Vagina (tissue), 2 donors: ENCODE measurements at regions of chr11 and their contacts with region 1.

Region 1: GRCh38 chr11:117316197-117316961 is at the start of gene BACE1:
- DNase-seq: no peak
- H3K4me3 ChIP-seq: peak within 1 kb of the TSS; percentile 86 to 89
- H3K27ac ChIP-seq: peak within 1 kb of the TSS; percentile 56
- H3K4me1 ChIP-seq: peaks cover 39% of the 10 kb centered on the region
- H3K27me3 ChIP-seq: no peaks in the 10 kb centered on the region
- CTCF ChIP-seq: peak in 2 of 3 experiments; percentile 8 to 24
- POLR2A ChIP-seq: no peak
- total RNA-seq, gene BACE1: 25.8 TPM

Region 2: DNA sequence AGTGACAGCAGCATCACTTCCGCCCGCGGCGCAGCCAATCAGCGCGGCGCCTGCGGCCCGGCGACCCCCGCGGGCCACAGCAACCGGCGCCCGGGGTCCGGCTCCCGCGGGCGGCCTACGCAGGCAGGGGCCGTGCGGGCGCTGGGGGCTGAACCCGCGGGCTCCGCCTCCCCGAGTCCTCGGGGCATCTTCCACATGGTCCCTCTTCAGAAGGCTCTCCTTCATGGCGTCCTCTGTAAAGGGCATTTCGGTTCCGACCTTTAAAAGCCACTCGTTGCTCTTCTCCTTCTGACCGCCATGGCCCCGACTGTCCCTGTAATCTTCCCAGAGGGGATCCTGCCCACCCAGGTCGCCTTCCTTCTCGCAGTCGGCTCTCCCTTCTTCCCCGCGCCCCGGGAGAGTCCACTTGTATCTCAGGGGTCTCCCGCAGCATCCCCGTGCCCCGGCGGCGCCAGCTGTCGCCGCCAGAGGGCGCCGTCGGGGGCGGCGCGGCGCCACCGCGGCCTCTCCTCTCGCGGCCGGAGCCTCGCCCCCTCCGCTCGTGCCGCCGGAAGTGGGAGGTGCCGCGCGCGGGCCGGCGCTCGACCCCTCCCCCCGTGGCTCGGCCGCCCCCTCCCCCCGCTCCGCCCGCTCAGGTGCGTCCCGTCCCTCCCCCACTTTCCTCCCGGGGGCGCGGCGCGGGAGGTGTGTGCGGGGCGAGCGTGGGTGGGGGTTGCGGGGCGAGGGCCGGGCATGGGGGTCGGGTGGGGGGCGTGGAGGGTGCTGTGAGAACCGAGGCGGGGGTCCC is 84.1 kb before region 1 on chr11 and contains the start of gene RNF214:
- intact Hi-C with region 1: loop called (anchors 5 kb)
- DNase-seq: no peak
- H3K4me3 ChIP-seq: peak within 1 kb of the TSS; percentile 87 to 99
- H3K27ac ChIP-seq: peak within 1 kb of the TSS; percentile 88
- H3K4me1 ChIP-seq: peaks cover 36% of the 10 kb centered on the region
- H3K27me3 ChIP-seq: no peaks in the 10 kb centered on the region
- CTCF ChIP-seq: peak; percentile 73 to 94 (median 85)
- POLR2A ChIP-seq: peak in 1 of 2 donors; percentile 43
- total RNA-seq, gene RNF214: 10.8 TPM